Activated B cell treated with CpG ODN at 0.5 μM for 24 hours (primary cell): ENCODE measurements at regions of chr11 and their contacts with region 1.

Region 1: GRCh38 chr11:67583247-67584204 is at the start of gene GSTP1:
- DNase-seq: peak; percentile 84
- ATAC-seq: peak; percentile 76
- H3K4me3 Mint-ChIP-seq: peak within 1 kb of the TSS; percentile 89
- H3K27ac Mint-ChIP-seq: peak within 1 kb of the TSS; percentile 99
- H3K4me1 Mint-ChIP-seq: peaks cover 76% of the 10 kb centered on the region
- H3K27me3 Mint-ChIP-seq: no peaks in the 10 kb centered on the region
- CTCF ChIP-seq: no peak
- total RNA-seq, gene GSTP1: 331 and 362 TPM in 2 replicates

Region 2: DNA sequence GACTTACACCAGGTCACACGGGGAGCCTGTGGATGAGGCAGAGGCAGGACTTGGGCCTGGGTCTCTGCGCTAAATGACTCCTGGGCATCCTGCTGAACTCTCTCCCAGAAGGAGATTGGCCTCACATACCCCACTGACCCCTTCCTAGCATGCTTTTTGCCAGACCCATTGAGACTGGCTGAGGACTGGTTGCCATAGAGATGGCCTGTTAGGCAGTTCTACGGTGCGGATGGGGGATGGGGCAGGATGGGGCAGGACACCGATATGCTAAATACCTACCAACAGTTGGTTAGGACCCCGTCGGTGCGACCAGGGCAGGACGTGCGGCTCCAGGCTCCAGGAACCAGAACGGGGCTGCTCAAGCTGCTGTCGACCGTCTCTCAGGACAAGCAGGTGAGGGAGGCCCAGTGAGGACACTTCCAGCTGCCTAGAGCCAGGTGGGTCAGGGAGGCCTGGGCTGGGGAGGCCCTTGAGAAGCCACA is 1638.1 kb before region 1 on chr11 and contains the start of gene TSGA10IP:
- CTCF ChIA-PET with region 1: no interaction called
- POLR2A ChIA-PET with region 1: no interaction called
- intact Hi-C with region 1: no loop called
- DNase-seq: no peak
- ATAC-seq: no peak
- H3K4me3 Mint-ChIP-seq: no peak within 1 kb of the TSS
- H3K27ac Mint-ChIP-seq: no peak within 1 kb of the TSS
- H3K4me1 Mint-ChIP-seq: peaks cover 9% of the 10 kb centered on the region
- H3K27me3 Mint-ChIP-seq: peaks cover 2% of the 10 kb centered on the region
- CTCF ChIP-seq: no peak
- total RNA-seq, gene TSGA10IP: not detected in 2 replicates

Region 3: GRCh38 chr11:67468835-67469811 is 114.4 kb before region 1 on chr11 and contains the start of gene TMEM134:
- CTCF ChIA-PET with region 1: no interaction called
- POLR2A ChIA-PET with region 1: no interaction called
- intact Hi-C with region 1: no loop called
- DNase-seq: peak; percentile 88
- ATAC-seq: peak; percentile 73
- H3K4me3 Mint-ChIP-seq: peak within 1 kb of the TSS; percentile 89
- H3K27ac Mint-ChIP-seq: peak within 1 kb of the TSS; percentile 91
- H3K4me1 Mint-ChIP-seq: peaks cover 49% of the 10 kb centered on the region
- H3K27me3 Mint-ChIP-seq: no peaks in the 10 kb centered on the region
- CTCF ChIP-seq: no peak
- total RNA-seq, gene TMEM134: 76.0 and 83.5 TPM in 2 replicates

Region 4: GRCh38 chr11:67606492-67607201 is 23.1 kb after region 1 on chr11 and contains the start of gene NDUFV1:
- CTCF ChIA-PET with region 1: interaction called, 4 read pairs
- POLR2A ChIA-PET with region 1: interaction called, 28 read pairs
- intact Hi-C with region 1: loop called (anchors 1 kb)
- DNase-seq: peak; percentile 93
- ATAC-seq: peak; percentile 99
- H3K4me3 Mint-ChIP-seq: peak within 1 kb of the TSS; percentile 90
- H3K27ac Mint-ChIP-seq: peak within 1 kb of the TSS; percentile 73
- H3K4me1 Mint-ChIP-seq: peaks cover 24% of the 10 kb centered on the region
- H3K27me3 Mint-ChIP-seq: peaks cover 11% of the 10 kb centered on the region
- CTCF ChIP-seq: no peak
- total RNA-seq, gene NDUFV1: 207 and 221 TPM in 2 replicates

Region 5: GRCh38 chr11:67613960-67614715 is 30.6 kb after region 1 on chr11:
- CTCF ChIA-PET with region 1: interaction called, 9 read pairs
- POLR2A ChIA-PET with region 1: interaction called, 66 read pairs
- intact Hi-C with region 1: loop called (anchors 1 kb)
- DNase-seq: peak; percentile 81
- ATAC-seq: peak; percentile 95
- H3K4me3 Mint-ChIP-seq: peak overlapping the region; percentile 84
- H3K27ac Mint-ChIP-seq: peak overlapping the region; percentile 99
- H3K4me1 Mint-ChIP-seq: peaks cover 41% of the 10 kb centered on the region
- H3K27me3 Mint-ChIP-seq: no peaks in the 10 kb centered on the region
- CTCF ChIP-seq: no peak

Region 6: DNA sequence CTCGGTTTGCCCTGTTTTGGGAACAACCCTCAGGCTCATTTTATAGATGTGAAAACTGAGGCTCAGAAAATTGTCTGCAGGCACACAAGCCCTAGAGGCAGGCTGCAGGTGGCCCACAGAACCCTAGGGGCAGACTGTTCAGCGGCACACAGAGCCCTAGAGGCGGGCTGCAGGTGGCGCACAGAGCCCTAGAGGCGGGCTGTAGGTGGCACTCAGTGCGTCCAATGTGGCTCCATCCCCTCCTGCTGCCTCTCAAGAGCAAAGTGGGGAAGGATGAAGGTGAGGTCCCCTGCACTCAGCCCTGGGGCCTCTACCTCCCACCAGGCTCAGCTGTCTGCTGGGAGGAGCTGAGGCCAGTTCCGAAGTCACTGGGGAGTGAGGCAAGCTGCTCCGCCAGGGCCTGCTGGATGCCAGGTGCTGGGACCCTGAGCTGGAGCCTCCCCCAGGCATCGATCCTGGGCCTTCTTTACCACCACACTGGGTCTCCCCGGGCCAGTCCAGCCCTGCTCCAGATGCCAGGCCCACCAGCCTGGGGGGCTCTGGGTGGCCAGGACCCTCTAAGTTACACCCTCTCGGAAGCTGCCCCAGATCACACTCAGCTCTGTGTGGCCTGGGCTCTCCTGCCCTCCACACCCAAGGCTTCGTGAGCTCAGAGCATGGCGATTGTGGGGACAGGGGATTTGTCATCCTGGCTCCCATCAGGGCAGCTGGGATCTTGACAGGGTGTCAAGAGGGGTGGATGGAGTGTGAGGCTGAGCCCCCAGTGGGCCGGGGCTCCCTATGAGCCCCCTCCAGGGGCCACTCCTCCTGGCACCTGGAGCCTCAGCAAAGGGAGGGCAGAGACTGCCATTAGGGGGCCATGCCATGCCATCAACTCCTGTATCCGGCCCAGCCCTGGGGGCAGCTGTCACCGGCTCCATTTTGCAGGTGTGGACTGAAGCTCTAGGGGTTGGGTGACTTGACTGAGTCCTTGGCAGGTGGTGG is 64.9 kb after region 1 on chr11:
- CTCF ChIA-PET with region 1: interaction called, 3 read pairs
- POLR2A ChIA-PET with region 1: interaction called, 11 read pairs
- intact Hi-C with region 1: no loop called
- DNase-seq: peak; percentile 59
- ATAC-seq: peak; percentile 85
- H3K4me3 Mint-ChIP-seq: peak overlapping the region; percentile 53
- H3K27ac Mint-ChIP-seq: peak overlapping the region; percentile 50
- H3K4me1 Mint-ChIP-seq: peaks cover 67% of the 10 kb centered on the region
- H3K27me3 Mint-ChIP-seq: peaks cover 2% of the 10 kb centered on the region
- CTCF ChIP-seq: peak; percentile 82